PC-3 (cell line): ENCODE measurements at regions of chrX and their contacts with region 1.

Region 1: DNA sequence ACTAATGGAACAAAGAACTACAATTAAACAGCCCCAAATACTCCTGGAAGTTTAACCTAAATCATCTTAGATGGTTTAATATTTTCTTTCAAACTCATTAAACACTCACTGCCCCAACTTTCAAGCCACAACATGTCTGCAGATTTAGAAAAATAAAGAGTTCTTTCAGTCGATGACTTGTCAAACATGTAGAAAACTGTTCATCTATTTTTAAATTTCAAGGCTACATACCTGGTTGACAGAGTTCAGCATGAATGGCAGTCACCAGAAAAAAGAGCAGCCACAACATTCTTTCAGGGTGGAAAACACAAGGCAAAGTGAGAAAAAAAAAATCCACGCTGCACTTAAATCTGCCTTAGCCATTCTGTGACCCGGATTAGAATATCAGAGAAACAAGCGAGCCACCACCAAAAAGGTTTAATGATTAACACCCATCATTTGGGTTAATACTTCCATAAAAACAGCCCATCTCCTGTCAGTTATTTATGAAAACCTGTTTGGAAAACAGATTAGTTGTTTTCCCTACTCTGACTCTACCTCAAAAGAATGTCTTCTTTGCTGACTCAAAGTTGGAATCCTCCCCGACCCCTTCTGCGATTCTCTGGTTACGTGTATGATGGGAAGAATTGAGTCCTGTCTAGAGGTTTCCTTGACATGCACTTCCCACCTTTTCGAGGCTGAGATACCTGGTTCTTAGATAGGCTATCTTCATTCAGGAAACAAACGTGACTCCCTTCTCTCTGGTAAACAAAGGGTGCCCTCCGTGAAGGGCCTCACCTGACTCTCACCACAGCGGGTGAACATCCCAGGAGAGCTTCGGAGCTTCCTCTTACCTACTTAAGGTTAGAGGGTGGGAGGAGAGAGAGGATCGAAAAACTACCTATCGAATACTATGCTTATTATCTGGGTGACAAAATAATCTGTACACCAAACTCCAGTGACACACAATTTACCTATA is at the start of gene CLTRN:
- DNase-seq: peak; percentile 82
- ATAC-seq: peak; percentile 60
- H3K4me3 ChIP-seq: peak within 1 kb of the TSS; percentile 60
- H3K27ac ChIP-seq: peak within 1 kb of the TSS; percentile 95
- H3K4me1 ChIP-seq: peaks cover 35% of the 10 kb centered on the region
- H3K27me3 ChIP-seq: no peaks in the 10 kb centered on the region
- CTCF ChIP-seq: no peak
- total RNA-seq, gene CLTRN: 6.1 and 9.1 TPM in 2 replicates

Region 2: DNA sequence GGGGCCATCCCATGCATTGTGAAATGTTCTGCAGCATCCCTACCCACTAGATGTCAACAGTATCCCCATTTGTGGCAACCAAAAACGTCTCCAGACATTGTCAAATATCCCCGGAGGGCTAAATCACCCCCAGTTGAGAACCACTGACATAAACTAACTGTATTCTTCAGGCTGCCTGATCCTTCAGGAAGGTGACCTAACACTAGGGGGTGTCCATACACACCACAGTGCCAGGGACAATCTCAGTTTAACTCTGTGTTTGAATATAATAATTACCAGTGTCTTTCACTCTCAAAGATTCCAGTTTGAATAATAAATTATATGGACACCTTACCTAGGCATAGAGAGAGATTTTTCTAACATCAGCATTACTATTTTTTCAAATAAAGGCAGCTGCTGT is 70.4 kb before region 1 on chrX:
- CTCF ChIA-PET with region 1: no interaction called
- POLR2A ChIA-PET with region 1: no interaction called
- intact Hi-C with region 1: loop called (anchors 5 kb)
- DNase-seq: peak; percentile 41
- ATAC-seq: peak; percentile 81
- H3K4me3 ChIP-seq: no peak overlapping the region
- H3K27ac ChIP-seq: no peak overlapping the region
- H3K4me1 ChIP-seq: no peaks in the 10 kb centered on the region; the same call in 1 of the 2 replicates
- H3K27me3 ChIP-seq: no peaks in the 10 kb centered on the region
- CTCF ChIP-seq: peak; percentile 72

Region 3: DNA sequence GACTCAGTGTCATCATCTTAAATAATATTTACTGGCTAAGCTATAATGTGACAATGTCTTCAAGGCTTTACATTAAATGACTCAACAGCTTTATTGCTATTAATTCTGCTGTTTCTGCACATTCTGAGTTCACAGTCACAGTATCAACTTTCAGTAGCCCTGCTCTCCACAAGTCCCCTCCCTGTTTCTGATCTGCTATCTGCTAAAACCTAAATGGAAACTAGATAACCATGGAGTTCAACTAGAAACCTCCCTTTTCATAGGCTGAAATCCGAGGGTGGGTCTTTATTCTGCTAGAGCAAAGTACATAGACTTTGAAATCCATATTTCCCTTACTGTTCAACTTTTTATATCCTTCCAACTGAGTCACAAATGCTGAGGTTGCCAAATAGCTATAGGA is 58.6 kb before region 1 on chrX:
- CTCF ChIA-PET with region 1: no interaction called
- POLR2A ChIA-PET with region 1: no interaction called
- intact Hi-C with region 1: loop called (anchors 5 kb)
- DNase-seq: peak; percentile 78
- ATAC-seq: peak; percentile 84
- H3K4me3 ChIP-seq: peak overlapping the region; percentile 53; the same call in 1 of the 2 replicates
- H3K27ac ChIP-seq: peak overlapping the region; percentile 85
- H3K4me1 ChIP-seq: peaks cover 34% of the 10 kb centered on the region
- H3K27me3 ChIP-seq: no peaks in the 10 kb centered on the region
- CTCF ChIP-seq: no peak